CD8-positive, alpha-beta T cell (primary cell): ENCODE measurements at regions of chr11 and their contacts with region 1.

Region 1: GRCh38 chr11:118051611-118052461 is 25.0 kb upstream of the TMPRSS4 start:
- DNase-seq: peak; percentile 55 to 93 (median 77)
- ATAC-seq: peak; percentile 92
- H3K4me3 ChIP-seq: peak overlapping the region in 1 of 2 experiments; percentile 20
- H3K4me3 Mint-ChIP-seq: peak overlapping the region; percentile 67
- H3K27ac ChIP-seq: peak overlapping the region; percentile 49 to 69
- H3K27ac Mint-ChIP-seq: peak overlapping the region; percentile 98
- H3K4me1 ChIP-seq: peaks cover 59% of the 10 kb centered on the region
- H3K4me1 Mint-ChIP-seq: peaks cover 58% of the 10 kb centered on the region
- H3K27me3 ChIP-seq: no peaks in the 10 kb centered on the region
- H3K27me3 Mint-ChIP-seq: no peaks in the 10 kb centered on the region
- CTCF ChIP-seq: no peak

Region 2: GRCh38 chr11:117426269-117426685 is 625.6 kb before region 1 on chr11:
- CTCF ChIA-PET with region 1: interaction called, 3 read pairs
- POLR2A ChIA-PET with region 1: no interaction called
- intact Hi-C with region 1: loop called in 1 of 2 experiments (anchors 5 kb)
- DNase-seq: peak; percentile 32 to 83 (median 65)
- ATAC-seq: peak; percentile 54
- H3K4me3 ChIP-seq: no peak overlapping the region
- H3K4me3 Mint-ChIP-seq: no peak overlapping the region
- H3K27ac ChIP-seq: no peak overlapping the region
- H3K27ac Mint-ChIP-seq: no peak overlapping the region
- H3K4me1 ChIP-seq: peaks cover 3% of the 10 kb centered on the region
- H3K4me1 Mint-ChIP-seq: no peaks in the 10 kb centered on the region
- H3K27me3 ChIP-seq: peaks cover 0 to 3% of the 10 kb centered on the region in 2 experiments
- H3K27me3 Mint-ChIP-seq: peaks cover 4% of the 10 kb centered on the region
- CTCF ChIP-seq: peak; percentile 97

Region 3: GRCh38 chr11:117828611-117829368 is 223.0 kb before region 1 on chr11:
- CTCF ChIA-PET with region 1: interaction called, 111 read pairs
- POLR2A ChIA-PET with region 1: interaction called, 12 read pairs
- intact Hi-C with region 1: loop called in 1 of 2 experiments (anchors 1 kb)
- DNase-seq: peak; percentile 58 to 94 (median 89)
- ATAC-seq: peak; percentile 87
- H3K4me3 ChIP-seq: no peak overlapping the region
- H3K4me3 Mint-ChIP-seq: peak overlapping the region; percentile 53
- H3K27ac ChIP-seq: peak overlapping the region in 1 of 2 experiments; percentile 69
- H3K27ac Mint-ChIP-seq: peak overlapping the region; percentile 91
- H3K4me1 ChIP-seq: peaks cover 52% of the 10 kb centered on the region
- H3K4me1 Mint-ChIP-seq: peaks cover 69% of the 10 kb centered on the region
- H3K27me3 ChIP-seq: no peaks in the 10 kb centered on the region
- H3K27me3 Mint-ChIP-seq: no peaks in the 10 kb centered on the region
- CTCF ChIP-seq: no peak

Region 4: DNA sequence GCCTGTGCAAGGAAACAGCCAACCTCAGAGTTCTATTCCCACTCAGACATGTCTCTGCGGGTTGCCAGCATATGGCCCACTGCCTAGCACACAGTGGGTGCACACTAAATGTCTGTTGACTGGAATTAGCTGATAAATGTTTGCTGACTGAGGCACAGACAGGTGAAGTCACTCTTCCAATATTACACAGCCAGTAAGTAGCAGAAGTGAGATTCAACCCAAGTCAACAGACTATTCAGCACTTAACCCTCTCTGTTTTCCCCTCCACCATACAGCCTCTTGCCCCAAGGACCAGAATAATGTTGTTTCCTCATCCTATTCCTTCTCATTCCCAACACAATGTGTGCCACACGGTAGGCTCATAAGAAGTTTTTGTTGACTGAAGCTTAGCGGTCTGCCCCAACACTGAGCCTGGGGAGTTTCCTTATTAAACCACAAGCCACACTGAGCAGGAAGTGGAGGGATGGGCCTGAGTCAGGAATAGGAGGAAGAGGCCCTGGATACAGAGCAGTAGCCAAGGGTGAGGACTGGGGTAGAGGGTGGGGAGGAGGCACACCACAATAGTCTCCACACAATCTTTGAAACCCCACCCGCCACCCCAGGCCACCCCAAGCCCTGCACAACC is 81.3 kb before region 1 on chr11:
- CTCF ChIA-PET with region 1: interaction called, 13 read pairs
- POLR2A ChIA-PET with region 1: interaction called, 4 read pairs
- intact Hi-C with region 1: no loop called
- DNase-seq: peak in 2 of 9 experiments; percentile 65 to 77
- ATAC-seq: peak; percentile 53
- H3K4me3 ChIP-seq: peak overlapping the region in 1 of 2 experiments; percentile 28
- H3K4me3 Mint-ChIP-seq: peak overlapping the region; percentile 35
- H3K27ac ChIP-seq: peak overlapping the region in 1 of 2 experiments; percentile 57
- H3K27ac Mint-ChIP-seq: peak overlapping the region; percentile 67
- H3K4me1 ChIP-seq: peaks cover 52% of the 10 kb centered on the region
- H3K4me1 Mint-ChIP-seq: peaks cover 61% of the 10 kb centered on the region
- H3K27me3 ChIP-seq: no peaks in the 10 kb centered on the region
- H3K27me3 Mint-ChIP-seq: no peaks in the 10 kb centered on the region
- CTCF ChIP-seq: no peak

Region 5: DNA sequence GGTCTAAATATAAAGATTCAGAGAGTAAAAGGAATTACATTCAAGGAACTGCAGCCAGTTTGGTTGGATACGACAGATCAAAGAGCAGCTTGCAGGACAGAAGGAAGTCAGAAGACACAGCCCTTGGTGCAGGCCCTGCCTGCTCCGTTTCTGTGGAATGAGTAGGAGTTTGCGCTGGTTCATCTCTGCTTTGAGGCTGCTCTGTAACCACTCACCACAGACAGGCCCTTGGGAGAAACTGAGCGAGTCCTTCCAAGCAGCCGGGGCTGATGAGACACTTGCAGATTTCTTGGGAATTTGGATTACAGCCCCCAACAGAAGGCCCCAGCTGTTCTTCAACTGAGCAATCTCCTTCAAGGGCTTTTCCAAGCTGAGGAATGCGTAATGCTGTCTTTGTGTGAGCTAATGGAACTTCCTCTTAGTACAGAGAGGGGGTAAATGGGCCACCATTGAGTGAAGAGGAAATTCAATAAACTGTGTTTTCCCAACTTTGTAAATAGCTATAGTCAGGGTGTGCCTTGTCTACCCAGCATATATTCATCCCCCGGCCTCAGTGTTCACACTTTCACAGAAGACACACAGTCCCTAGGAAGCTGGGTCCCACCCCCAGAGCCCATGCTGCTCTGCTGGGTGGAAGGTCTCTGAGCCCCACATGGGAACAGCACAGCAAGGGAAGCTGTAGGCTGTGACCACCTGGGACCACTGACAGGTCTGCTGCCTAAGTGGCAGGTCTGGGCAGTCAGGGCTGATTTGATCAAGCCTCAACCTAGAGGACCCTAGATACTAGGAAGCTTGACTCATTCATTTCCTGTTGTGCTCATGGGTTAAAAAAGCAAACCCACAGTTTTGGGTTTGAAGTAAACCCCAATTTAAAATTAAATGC is 49.1 kb before region 1 on chr11:
- CTCF ChIA-PET with region 1: interaction called, 270 read pairs
- POLR2A ChIA-PET with region 1: interaction called, 176 read pairs
- intact Hi-C with region 1: loop called (anchors 2 to 5 kb)
- DNase-seq: peak in 5 of 9 experiments; percentile 42 to 76 (median 55)
- ATAC-seq: peak; percentile 42
- H3K4me3 ChIP-seq: no peak overlapping the region
- H3K4me3 Mint-ChIP-seq: peak overlapping the region; percentile 26
- H3K27ac ChIP-seq: peak overlapping the region; percentile 20 to 84
- H3K27ac Mint-ChIP-seq: peak overlapping the region; percentile 91
- H3K4me1 ChIP-seq: peaks cover 89% of the 10 kb centered on the region
- H3K4me1 Mint-ChIP-seq: peaks cover 94% of the 10 kb centered on the region
- H3K27me3 ChIP-seq: no peaks in the 10 kb centered on the region
- H3K27me3 Mint-ChIP-seq: no peaks in the 10 kb centered on the region
- CTCF ChIP-seq: no peak

Region 6: GRCh38 chr11:118027691-118028090 is 24.1 kb before region 1 on chr11:
- CTCF ChIA-PET with region 1: interaction called, 15 read pairs
- POLR2A ChIA-PET with region 1: no interaction called
- intact Hi-C with region 1: loop called (anchors 1 to 2 kb)
- DNase-seq: no peak
- ATAC-seq: no peak
- H3K4me3 ChIP-seq: no peak overlapping the region
- H3K4me3 Mint-ChIP-seq: no peak overlapping the region
- H3K27ac ChIP-seq: no peak overlapping the region
- H3K27ac Mint-ChIP-seq: no peak overlapping the region
- H3K4me1 ChIP-seq: peaks cover 11% of the 10 kb centered on the region
- H3K4me1 Mint-ChIP-seq: peaks cover 35% of the 10 kb centered on the region
- H3K27me3 ChIP-seq: no peaks in the 10 kb centered on the region
- H3K27me3 Mint-ChIP-seq: no peaks in the 10 kb centered on the region
- CTCF ChIP-seq: no peak

Region 7: GRCh38 chr11:118398791-118399559 is 347.1 kb after region 1 on chr11:
- CTCF ChIA-PET with region 1: no interaction called
- POLR2A ChIA-PET with region 1: no interaction called
- intact Hi-C with region 1: no loop called
- DNase-seq: peak in 7 of 9 experiments; percentile 22 to 94 (median 54)
- ATAC-seq: peak; percentile 78
- H3K4me3 ChIP-seq: no peak overlapping the region
- H3K4me3 Mint-ChIP-seq: peak overlapping the region; percentile 93
- H3K27ac ChIP-seq: peak overlapping the region; percentile 77 to 96
- H3K27ac Mint-ChIP-seq: peak overlapping the region; percentile 100
- H3K4me1 ChIP-seq: peaks cover 47% of the 10 kb centered on the region
- H3K4me1 Mint-ChIP-seq: peaks cover 65% of the 10 kb centered on the region
- H3K27me3 ChIP-seq: no peaks in the 10 kb centered on the region
- H3K27me3 Mint-ChIP-seq: no peaks in the 10 kb centered on the region
- CTCF ChIP-seq: no peak

Region 8: GRCh38 chr11:118771547-118772288 is 719.9 kb after region 1 on chr11:
- CTCF ChIA-PET with region 1: no interaction called
- POLR2A ChIA-PET with region 1: no interaction called
- intact Hi-C with region 1: no loop called
- DNase-seq: no peak
- ATAC-seq: no peak
- H3K4me3 ChIP-seq: no peak overlapping the region
- H3K4me3 Mint-ChIP-seq: peak overlapping the region; percentile 63
- H3K27ac ChIP-seq: peak overlapping the region in 1 of 2 experiments; percentile 0
- H3K27ac Mint-ChIP-seq: peak overlapping the region; percentile 71
- H3K4me1 ChIP-seq: peaks cover 78% of the 10 kb centered on the region
- H3K4me1 Mint-ChIP-seq: peaks cover 89% of the 10 kb centered on the region
- H3K27me3 ChIP-seq: no peaks in the 10 kb centered on the region
- H3K27me3 Mint-ChIP-seq: no peaks in the 10 kb centered on the region
- CTCF ChIP-seq: no peak